ENCODE measurements at regions of chr19 and their contacts with region 1.

Region 1: DNA sequence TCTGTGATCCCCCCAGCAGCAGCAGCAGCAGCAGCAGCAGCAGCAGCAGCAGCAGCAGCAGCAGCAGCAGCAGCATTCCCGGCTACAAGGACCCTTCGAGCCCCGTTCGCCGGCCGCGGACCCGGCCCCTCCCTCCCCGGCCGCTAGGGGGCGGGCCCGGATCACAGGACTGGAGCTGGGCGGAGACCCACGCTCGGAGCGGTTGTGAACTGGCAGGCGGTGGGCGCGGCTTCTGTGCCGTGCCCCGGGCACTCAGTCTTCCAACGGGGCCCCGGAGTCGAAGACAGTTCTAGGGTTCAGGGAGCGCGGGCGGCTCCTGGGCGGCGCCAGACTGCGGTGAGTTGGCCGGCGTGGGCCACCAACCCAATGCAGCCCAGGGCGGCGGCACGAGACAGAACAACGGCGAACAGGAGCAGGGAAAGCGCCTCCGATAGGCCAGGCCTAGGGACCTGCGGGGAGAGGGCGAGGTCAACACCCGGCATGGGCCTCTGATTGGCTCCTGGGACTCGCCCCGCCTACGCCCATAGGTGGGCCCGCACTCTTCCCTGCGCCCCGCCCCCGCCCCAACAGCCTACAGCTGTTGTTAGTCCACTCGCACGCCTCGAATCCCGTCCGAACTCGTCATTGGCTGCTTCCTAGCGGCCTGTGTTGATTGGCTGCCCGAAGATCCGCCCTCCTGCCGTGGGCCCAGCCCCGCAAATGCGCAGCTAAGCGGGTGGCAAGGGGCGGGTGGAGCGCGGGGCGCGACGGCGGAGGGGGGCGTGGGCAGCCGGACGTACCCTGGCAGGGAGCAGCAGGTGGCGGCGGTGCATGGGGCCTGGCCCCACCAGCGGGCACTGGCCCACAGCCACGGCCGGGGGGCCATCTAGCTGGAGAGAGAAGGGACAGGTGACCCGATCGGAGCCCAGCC is 1.4 kb upstream of the SIX5 start:
- H3K4me3 ChIP-seq: peak overlapping the region; percentile 36
- H3K27ac ChIP-seq: peak overlapping the region; percentile 70
- H3K4me1 ChIP-seq: peaks cover 15% of the 10 kb centered on the region
- CTCF ChIP-seq: peak; percentile 97

Region 2: DNA sequence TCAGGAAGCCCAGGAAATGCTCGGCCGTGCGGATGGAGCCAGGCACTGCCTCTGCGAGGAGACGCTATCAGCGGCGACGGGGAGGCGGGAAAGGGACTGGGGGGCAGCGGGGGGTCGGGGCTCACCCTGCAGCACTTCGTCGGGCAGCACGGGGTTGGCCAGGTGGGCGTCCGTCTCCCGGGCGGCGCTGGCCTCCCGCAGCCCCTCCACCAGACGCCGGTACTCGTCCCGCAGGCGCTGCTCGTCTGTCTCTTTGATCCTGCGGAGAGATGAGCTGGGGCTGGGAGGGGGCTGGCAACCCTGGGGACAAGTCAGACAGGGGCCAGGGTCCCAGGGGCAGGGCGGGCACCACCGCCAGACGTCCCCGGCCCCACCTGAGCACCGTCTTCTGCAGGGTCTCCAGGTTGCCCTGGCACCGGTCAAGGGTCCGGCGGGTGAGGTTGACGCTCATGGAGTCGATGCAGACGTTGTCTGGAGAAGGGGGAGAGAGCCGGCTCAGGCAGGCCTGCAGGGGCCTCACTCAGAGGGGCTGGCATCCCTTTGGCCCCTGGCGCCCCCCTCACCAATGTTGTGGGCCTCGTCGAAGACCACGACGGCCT is 406.5 kb before region 1 on chr19:
- CTCF ChIA-PET with region 1: no interaction called
- POLR2A ChIA-PET with region 1: interaction called, 10 read pairs
- H3K4me3 ChIP-seq: no peak overlapping the region
- H3K27ac ChIP-seq: no peak overlapping the region
- H3K4me1 ChIP-seq: no peaks in the 10 kb centered on the region
- CTCF ChIP-seq: no peak

Region 3: DNA sequence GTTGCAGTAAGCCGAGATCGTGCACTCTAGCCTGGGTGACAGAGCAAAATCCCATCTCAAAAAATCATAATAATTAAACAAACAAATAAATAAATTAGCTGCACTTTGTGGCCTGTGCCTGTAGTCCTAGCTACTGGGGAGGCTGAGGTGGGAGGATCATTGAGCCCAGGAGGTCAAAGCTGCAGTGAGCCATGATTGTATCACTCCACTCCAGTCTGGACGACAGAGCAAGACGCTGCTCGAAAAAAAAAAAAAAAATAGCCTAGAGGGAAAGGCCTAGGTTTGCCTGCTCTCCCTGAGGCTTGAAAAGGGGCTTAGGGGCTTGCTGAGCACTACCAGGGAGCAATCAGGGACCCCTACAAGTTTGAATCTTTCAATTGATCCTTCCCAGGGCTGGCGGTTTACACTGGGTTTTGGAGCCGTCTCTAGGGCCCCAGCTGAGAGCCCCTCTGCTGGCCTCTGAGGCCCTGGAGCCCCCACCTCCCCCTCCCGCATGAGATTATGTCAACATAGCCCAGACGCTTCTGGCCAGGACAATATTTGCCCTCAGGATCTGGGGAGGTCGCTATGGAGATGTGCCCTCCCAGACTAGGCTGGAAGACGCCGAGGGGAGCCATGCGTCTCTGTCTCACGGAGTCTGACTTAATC is 112.8 kb before region 1 on chr19:
- CTCF ChIA-PET with region 1: no interaction called
- POLR2A ChIA-PET with region 1: no interaction called
- H3K4me3 ChIP-seq: no peak overlapping the region
- H3K27ac ChIP-seq: no peak overlapping the region
- H3K4me1 ChIP-seq: no peaks in the 10 kb centered on the region
- CTCF ChIP-seq: no peak

Region 4: DNA sequence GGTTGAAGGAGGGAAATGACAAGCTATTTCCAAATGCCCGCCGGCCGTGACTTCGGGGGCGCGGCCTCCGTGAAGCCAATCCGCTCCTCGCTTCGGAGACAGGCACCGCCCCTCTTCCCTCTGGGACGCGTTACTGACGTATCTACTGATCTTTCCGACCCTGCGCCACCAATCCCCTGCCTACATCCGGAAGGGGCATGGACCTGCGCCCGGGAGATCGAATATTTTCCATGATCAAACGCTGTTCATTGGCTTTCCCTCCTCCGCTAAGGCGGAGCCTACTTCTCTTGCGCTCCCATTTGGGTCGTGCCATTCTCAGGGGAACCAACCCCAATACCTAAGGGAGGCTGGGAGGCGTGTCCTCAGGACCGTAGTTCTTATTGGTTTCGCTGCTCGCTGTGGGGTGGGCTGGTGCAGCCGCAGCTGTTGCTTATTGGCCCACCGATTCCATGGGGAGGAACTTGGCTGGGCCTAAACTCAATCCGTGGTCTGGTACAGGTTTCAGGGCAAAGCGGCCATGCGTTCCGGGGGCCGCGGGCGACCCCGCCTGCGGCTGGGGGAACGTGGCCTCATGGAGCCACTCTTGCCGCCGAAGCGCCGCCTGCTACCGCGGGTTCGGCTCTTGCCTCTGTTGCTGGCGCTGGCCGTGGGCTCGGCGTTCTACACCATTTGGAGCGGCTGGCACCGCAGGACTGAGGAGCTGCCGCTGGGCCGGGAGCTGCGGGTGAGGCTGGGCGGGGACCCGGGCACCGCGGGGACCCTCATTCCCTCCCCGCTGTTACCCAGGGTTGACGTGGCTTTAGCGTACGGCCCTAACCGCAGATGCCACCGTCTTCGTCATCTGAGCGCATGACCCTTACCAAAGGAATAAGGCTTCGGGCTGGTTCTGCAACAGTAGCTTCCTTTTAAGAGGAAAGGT is 78.0 kb before region 1 on chr19 and contains the start of gene QPCTL:
- CTCF ChIA-PET with region 1: interaction called, 37 read pairs
- POLR2A ChIA-PET with region 1: interaction called, 111 read pairs
- H3K4me3 ChIP-seq: peak within 1 kb of the TSS; percentile 82
- H3K27ac ChIP-seq: peak within 1 kb of the TSS; percentile 93
- H3K4me1 ChIP-seq: no peaks in the 10 kb centered on the region; the same call in 1 of the 2 replicates
- CTCF ChIP-seq: no peak

Region 5: DNA sequence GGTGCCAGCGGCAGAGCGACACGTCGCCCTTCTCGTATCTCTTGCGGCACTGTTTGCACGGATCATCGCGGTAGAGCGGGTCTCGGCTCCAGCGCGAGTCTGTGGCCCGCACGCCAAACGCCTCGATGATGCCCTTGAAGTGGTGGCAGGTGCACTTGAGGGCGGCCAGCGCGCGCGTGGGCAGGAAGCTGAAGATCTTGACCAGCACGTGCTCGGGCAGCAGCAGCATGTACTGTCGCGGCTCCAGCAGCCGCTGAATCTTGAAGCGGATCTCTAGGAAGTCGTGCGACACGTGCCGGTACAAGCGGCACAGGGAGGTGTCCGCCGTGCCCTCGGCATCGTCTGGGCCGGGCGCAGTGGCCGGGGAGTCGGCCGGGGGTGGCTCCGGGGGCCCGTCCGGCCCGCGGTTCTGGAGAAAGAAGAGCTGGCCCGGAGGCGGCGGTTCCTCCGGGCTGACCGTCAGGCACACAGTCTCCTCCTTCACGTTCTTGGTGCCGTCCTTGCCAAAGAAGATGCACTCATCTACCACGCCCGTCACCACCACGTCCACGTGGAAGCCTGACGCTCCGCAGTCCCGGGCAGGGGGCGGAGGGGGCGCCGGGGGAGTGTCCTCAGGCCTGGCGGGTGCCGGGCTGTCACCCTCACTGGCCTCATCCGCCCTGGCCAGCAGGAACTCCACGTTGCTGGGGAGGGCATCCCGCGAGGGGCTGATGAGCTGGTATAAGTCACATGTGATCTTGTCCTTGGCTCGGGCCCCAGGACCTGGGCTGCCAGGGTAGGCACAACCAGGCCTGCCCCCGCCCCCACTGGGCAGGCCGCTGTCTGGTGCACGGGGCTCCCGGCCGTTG is 58.4 kb before region 1 on chr19:
- CTCF ChIA-PET with region 1: interaction called, 27 read pairs
- POLR2A ChIA-PET with region 1: interaction called, 133 read pairs
- H3K4me3 ChIP-seq: no peak overlapping the region
- H3K27ac ChIP-seq: no peak overlapping the region
- H3K4me1 ChIP-seq: peaks cover 11% of the 10 kb centered on the region
- CTCF ChIP-seq: no peak

Region 6: GRCh38 chr19:45730389-45731288 is 39.8 kb before region 1 on chr19 and contains the start of gene FBXO46:
- CTCF ChIA-PET with region 1: interaction called, 8 read pairs
- POLR2A ChIA-PET with region 1: interaction called, 64 read pairs
- H3K4me3 ChIP-seq: peak within 1 kb of the TSS; percentile 66
- H3K27ac ChIP-seq: peak within 1 kb of the TSS; percentile 44; the same call in 1 of the 2 replicates
- H3K4me1 ChIP-seq: peaks cover 5% of the 10 kb centered on the region; the same call in 1 of the 2 replicates
- CTCF ChIP-seq: peak; percentile 94

Region 7: GRCh38 chr19:45792470-45793177 is 22.2 kb after region 1 on chr19 and contains the start of gene DMWD:
- CTCF ChIA-PET with region 1: interaction called, 18 read pairs
- POLR2A ChIA-PET with region 1: interaction called, 40 read pairs
- H3K4me3 ChIP-seq: peak within 1 kb of the TSS; percentile 86
- H3K27ac ChIP-seq: peak within 1 kb of the TSS; percentile 96
- H3K4me1 ChIP-seq: peaks cover 13% of the 10 kb centered on the region
- CTCF ChIP-seq: no peak

Region 8: DNA sequence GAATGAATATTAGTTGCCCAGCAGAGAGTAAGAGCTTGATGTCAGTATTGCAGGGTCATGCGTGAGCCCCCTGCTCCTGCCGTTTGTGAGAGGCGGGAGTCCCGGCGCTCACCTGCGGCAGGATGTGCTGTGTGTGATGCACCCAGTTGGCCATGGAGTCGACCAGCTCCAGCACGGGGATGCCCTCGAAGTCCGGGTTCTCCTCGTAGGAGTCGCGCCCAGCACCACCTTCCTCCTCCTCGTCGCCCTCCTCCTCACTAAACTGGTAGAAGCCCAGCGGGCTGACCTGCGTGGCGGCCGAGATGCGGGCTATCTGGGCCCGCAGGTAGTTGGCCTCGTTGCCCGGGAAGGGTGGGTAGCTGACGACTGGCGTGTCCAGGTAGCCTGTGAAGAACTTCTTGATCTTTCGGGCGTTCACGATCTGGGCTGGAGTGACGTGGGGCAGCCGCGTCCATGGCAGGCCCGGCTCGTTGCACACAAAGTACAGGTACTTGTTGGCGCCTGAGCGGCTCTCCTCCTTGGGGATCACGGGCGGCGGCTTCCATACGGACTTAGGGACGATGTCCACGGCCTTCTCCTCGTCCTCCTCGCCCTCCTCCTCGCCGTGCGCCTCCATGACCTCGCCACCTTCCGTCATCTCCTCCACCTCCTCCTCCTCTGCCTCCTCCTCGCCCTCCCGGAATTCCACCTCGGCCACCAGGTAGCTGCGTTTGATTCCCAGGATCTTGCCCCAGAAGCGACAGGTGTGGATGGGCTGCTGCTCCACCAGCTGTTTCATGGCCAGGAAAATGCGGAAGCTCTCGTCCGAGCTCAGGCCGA is 33.9 kb after region 1 on chr19:
- CTCF ChIA-PET with region 1: interaction called, 61 read pairs
- POLR2A ChIA-PET with region 1: interaction called, 37 read pairs
- H3K4me3 ChIP-seq: no peak overlapping the region
- H3K27ac ChIP-seq: no peak overlapping the region
- H3K4me1 ChIP-seq: peaks cover under 1% of the 10 kb centered on the region; the same call in 1 of the 2 replicates
- CTCF ChIP-seq: no peak